Caco-2 (cell line): ENCODE measurements at regions of chr19 and their contacts with region 1.

Region 1: DNA sequence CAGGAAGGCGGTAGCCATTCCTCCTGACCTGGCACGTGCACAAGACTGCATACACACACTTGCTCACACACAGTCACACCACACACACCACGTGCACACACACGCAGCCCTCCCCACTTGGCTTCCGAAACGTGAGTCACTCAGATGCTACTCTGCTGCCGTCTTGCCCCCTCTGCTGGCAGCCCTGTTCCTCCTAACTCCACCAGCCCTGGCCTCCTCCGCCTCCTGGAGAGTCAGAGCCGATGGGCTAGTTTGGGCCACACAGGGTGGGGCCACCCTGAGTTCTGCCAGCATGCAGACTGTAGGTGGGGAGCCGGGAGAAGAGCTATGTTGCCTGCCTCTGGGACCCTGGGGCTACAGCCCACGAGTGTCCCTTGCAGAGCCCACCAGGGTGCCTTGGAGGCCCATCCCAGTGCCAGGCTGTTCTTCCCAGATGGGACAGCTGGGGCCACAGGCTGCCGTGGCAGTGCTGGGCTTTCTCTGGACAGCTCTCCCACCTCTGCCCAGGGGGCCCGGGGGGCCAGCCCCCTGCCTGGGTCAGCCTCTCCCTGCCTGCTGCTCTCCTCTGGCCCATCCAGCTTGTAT is 12.1 kb downstream of the PIN1 start:
- DNase-seq: peak in 1 of 2 experiments; percentile 46
- H3K4me3 ChIP-seq: no peak overlapping the region
- H3K4me3 Mint-ChIP-seq: no peak overlapping the region
- H3K27ac Mint-ChIP-seq: no peak overlapping the region
- H3K4me1 ChIP-seq: no peaks in the 10 kb centered on the region
- H3K4me1 Mint-ChIP-seq: no peaks in the 10 kb centered on the region
- H3K27me3 ChIP-seq: no peaks in the 10 kb centered on the region
- H3K27me3 Mint-ChIP-seq: no peaks in the 10 kb centered on the region
- CTCF ChIP-seq: peak; percentile 28 to 61

Region 2: GRCh38 chr19:9834726-9835506 is 12.3 kb before region 1 on chr19 and contains the start of gene PIN1:
- CTCF ChIA-PET with region 1: no interaction called
- POLR2A ChIA-PET with region 1: no interaction called
- intact Hi-C with region 1: no loop called
- DNase-seq: peak; percentile 98
- H3K4me3 ChIP-seq: peak within 1 kb of the TSS; percentile 95
- H3K4me3 Mint-ChIP-seq: peak within 1 kb of the TSS; percentile 84
- H3K27ac Mint-ChIP-seq: peak within 1 kb of the TSS; percentile 83
- H3K4me1 ChIP-seq: no peaks in the 10 kb centered on the region; the same call in 1 of the 2 replicates
- H3K4me1 Mint-ChIP-seq: no peaks in the 10 kb centered on the region
- H3K27me3 ChIP-seq: no peaks in the 10 kb centered on the region
- H3K27me3 Mint-ChIP-seq: no peaks in the 10 kb centered on the region
- CTCF ChIP-seq: peak; percentile 30 to 40
- total RNA-seq, gene PIN1: 63.3 and 65.3 TPM in 2 replicates

Region 3: GRCh38 chr19:9914315-9915207 is 67.4 kb after region 1 on chr19:
- CTCF ChIA-PET with region 1: no interaction called
- POLR2A ChIA-PET with region 1: no interaction called
- intact Hi-C with region 1: loop called (anchors 2 kb)
- DNase-seq: peak; percentile 74 to 84
- H3K4me3 ChIP-seq: peak overlapping the region; percentile 46
- H3K4me3 Mint-ChIP-seq: peak overlapping the region; percentile 46
- H3K27ac Mint-ChIP-seq: no peak overlapping the region
- H3K4me1 ChIP-seq: no peaks in the 10 kb centered on the region
- H3K4me1 Mint-ChIP-seq: peaks cover 7% of the 10 kb centered on the region
- H3K27me3 ChIP-seq: no peaks in the 10 kb centered on the region
- H3K27me3 Mint-ChIP-seq: peaks cover 8% of the 10 kb centered on the region
- CTCF ChIP-seq: peak; percentile 64 to 74

Region 4: DNA sequence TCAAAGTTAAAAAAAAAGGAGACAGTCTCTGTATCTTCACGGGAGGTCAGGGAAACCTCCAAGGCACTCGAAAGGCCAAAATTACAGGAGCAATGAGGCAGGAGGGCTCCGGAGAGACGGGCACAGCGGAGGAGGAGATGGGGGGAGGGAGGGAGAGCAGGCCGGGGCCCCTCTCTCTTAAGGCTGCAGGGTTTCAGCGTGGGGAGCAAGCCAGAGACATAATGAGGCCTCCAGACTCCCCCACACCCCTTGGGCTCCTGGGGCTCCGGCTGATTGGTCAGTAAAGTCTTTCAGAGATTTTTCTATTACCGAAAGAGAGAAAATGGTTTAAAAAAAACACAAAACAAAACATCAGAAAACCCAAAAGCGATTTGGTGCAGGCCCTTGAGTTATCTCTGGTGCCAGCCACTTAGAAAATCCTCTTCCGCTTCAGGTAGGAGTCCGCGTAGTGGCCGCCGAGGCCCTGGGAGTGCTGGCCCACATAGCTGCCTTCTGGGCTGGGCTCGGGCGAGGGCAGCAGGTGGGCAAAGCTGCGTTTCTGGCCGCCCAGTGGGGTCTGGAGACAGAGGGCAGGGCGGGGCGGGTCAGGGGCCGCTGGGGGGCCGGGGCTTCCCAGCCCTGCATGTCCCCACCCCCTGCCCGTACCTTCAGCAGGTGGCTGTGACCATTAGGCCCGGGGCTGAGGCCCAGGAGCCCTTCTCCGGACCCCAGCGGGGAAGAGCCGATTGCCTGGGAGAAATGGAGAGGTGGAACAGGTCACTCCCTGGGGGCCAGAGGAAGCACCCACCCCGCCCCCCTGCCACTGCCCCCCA is 470.1 kb after region 1 on chr19:
- CTCF ChIA-PET with region 1: interaction called, 13 read pairs
- POLR2A ChIA-PET with region 1: no interaction called
- intact Hi-C with region 1: no loop called
- DNase-seq: no peak
- H3K4me3 ChIP-seq: no peak overlapping the region
- H3K4me3 Mint-ChIP-seq: no peak overlapping the region
- H3K27ac Mint-ChIP-seq: peak overlapping the region; percentile 91
- H3K4me1 ChIP-seq: peaks cover 12% of the 10 kb centered on the region; the same call in 1 of the 2 replicates
- H3K4me1 Mint-ChIP-seq: peaks cover 17% of the 10 kb centered on the region
- H3K27me3 ChIP-seq: no peaks in the 10 kb centered on the region
- H3K27me3 Mint-ChIP-seq: no peaks in the 10 kb centered on the region
- CTCF ChIP-seq: no peak